Activated T-helper 2 cell treated with anti-CD3 and anti-CD28 coated beads, Interferon-gamma antibody, Interleukin-2, Interleukin-4, amounts not matched to agents 10 μg/mL and 5 μg/mL and 100 μg/mL, durations not matched to agents 14 hours and 24 hours and 36 hours (primary cell): ENCODE measurements at regions of chr18 and their contacts with region 1.

Region 1: DNA sequence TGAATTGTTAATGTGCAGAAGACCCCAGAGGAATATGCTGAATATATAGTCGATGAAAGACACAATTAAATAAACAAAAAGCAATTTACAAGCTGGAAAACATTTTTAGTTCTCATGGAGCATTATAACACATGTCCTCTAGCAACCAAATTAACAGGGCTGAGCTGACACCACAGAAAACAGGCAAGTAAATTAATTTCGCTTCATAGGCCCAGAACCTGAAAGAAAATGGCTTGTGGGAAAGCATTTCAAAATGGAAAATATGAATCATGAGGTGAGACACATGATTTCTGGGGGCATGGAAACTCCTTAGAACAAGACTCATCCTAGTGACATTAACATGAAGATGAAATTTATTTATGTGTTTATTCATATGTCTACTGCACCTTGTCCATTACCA is 25.0 kb upstream of the RNF152 start:
- DNase-seq: no peak
- H3K4me3 Mint-ChIP-seq: no peak overlapping the region
- H3K27ac Mint-ChIP-seq: no peak overlapping the region
- H3K4me1 Mint-ChIP-seq: peaks cover 19% of the 10 kb centered on the region
- H3K27me3 Mint-ChIP-seq: peaks cover 8% of the 10 kb centered on the region

Region 2: DNA sequence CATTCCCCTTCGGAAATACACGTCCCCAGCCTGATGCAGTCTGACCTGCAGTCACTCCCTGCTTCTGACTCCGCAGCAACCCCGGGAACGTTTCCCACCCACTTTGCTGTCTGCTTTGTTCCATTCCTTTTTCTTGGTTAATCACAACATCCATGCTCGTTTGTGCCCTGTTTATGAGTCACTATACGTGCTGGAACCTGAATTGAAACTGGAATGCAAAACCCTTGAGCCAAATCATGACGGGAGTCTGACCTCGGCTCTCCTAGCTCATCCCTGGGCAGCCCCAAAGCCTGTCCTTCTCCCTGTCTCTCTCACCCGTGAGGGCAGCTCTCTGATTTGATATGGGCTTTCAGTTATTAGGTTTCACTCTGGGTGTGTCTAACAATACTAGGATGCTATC is 32.1 kb after region 1 on chr18:
- intact Hi-C with region 1: loop called (anchors 5 kb)
- DNase-seq: no peak
- H3K4me3 Mint-ChIP-seq: no peak overlapping the region
- H3K27ac Mint-ChIP-seq: no peak overlapping the region
- H3K4me1 Mint-ChIP-seq: peaks cover 30% of the 10 kb centered on the region
- H3K27me3 Mint-ChIP-seq: peaks cover 58% of the 10 kb centered on the region

Region 3: DNA sequence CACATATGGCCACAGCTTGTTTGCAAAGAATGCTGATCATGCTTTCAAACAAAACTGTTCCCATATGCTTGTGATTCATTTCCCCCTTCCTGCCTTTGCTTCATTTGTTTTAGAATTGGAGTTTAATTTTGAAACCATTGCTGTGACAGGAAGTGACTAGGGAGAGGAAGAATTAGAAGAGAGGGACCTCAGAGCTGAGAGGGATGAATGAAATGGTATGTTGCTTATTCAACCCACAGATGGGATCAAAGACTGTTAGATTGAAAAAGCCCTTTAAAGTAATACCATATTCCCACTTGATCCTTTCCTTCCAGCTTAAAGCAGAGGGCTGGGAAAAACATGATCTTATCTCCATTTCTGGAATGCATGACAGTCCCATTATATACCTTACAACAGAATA is 81.1 kb after region 1 on chr18:
- intact Hi-C with region 1: no loop called
- DNase-seq: no peak
- H3K4me3 Mint-ChIP-seq: no peak overlapping the region
- H3K27ac Mint-ChIP-seq: no peak overlapping the region
- H3K4me1 Mint-ChIP-seq: peaks cover 3% of the 10 kb centered on the region
- H3K27me3 Mint-ChIP-seq: peaks cover 15% of the 10 kb centered on the region